Stomach (tissue), 19 donors: ENCODE measurements at regions of chr10 and their contacts with region 1.

Region 1: DNA sequence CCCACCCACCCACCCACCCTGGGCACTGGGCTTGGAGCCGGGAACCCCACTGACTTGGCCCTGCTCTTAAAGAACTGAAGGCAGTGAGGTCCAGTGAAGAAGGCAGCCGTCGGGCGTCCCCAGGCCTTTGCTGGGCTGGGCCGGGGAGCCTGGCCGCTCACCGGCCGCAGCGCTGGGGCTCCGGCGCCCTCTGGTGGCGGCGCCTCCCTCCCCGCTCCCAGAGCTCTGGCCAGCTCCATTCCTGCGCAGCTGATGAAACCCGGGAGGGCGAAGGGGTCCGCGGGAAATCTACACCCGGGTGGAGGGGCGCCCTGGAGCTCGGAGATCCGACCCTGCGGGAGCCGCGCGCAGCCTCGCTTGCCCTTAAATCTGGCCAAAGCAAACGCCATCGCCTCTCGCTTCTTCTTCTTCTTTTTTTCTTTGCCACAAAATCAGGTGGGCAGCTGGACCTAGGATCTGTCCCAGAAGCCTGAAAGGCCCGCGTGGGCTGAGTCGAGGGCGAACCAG is 1.7 kb upstream of the CXCL12 start:
- DNase-seq: peak; percentile 60 to 92
- H3K4me3 ChIP-seq: no peak overlapping the region
- H3K27ac ChIP-seq: peak overlapping the region in 1 of 5 donors; percentile 78
- H3K4me1 ChIP-seq: peaks cover 16 to 50% (median 33%) of the 10 kb centered on the region in 4 donors
- H3K27me3 ChIP-seq: peaks cover 0 to 63% (median 43%) of the 10 kb centered on the region in 3 donors
- CTCF ChIP-seq: peak in 5 of 7 experiments; percentile 73 to 91 (median 86)
- EP300 ChIP-seq: no peak
- POLR2A ChIP-seq: no peak

Region 2: DNA sequence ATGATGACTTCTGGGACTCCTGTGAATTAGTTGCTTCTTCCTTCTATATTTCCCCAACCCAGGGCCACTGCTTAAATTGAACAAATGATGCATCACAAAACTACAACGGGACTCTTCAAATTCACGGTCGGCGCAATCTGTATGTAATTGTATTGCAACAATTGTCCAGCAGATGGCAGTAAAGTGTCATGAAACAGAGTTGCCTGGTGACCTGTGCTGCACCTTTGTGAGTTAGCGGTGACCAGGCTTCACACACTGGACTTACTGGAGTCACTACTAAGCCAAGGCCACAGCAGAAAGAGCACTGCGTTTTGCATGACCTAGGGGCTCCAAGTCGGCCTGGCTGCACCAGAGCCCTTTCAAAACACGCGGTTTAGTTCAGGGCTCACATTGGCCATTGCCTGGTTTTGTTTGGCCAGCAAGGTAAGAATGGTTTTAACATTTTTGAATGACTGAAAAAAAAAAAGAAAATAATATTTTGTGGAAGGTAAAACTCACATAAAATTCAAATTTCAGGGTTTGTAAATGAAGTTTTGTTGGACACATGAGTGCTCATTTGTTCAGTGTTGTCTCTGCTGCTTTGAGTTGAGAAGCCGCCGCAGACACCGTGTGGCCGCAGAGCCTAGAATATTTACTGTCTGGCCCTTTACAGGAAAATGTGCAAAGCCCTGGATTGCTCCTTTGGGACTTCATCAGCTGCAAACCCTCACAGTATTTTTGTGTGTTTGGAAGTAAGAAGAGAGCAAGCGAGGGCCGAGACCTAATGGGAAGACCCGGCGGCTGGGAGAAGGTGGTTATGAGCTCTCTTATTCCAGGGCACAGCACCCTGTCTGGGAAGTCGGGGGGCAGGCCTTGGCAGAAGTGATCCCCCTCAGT is 714.7 kb before region 1 on chr10:
- intact Hi-C with region 1: loop called (anchors 5 kb)
- DNase-seq: peak; percentile 60 to 86
- H3K4me3 ChIP-seq: no peak overlapping the region
- H3K27ac ChIP-seq: no peak overlapping the region
- H3K4me1 ChIP-seq: peaks cover 0 to 20% (median 11%) of the 10 kb centered on the region in 4 donors
- H3K27me3 ChIP-seq: peaks cover 5 to 44% (median 11%) of the 10 kb centered on the region in 3 donors
- CTCF ChIP-seq: peak in 5 of 7 experiments; percentile 64 to 90 (median 82)
- EP300 ChIP-seq: no peak
- POLR2A ChIP-seq: no peak

Region 3: GRCh38 chr10:43689955-43690771 is 696.4 kb before region 1 on chr10:
- intact Hi-C with region 1: loop called (anchors 5 kb)
- DNase-seq: peak; percentile 84 to 96
- H3K4me3 ChIP-seq: peak overlapping the region; percentile 50 to 60 (median 56)
- H3K27ac ChIP-seq: peak overlapping the region; percentile 27 to 86 (median 80)
- H3K4me1 ChIP-seq: peaks cover 9 to 32% (median 13%) of the 10 kb centered on the region in 4 donors
- H3K27me3 ChIP-seq: no peaks in the 10 kb centered on the region
- CTCF ChIP-seq: peak in 5 of 7 experiments; percentile 82 to 97 (median 91)
- EP300 ChIP-seq: no peak
- POLR2A ChIP-seq: no peak